Mucosa of descending colon (tissue), 3 donors: ENCODE measurements at regions of chr2 and their contacts with region 1.

Region 1: GRCh38 chr2:196275646-196276352 is 104.4 kb upstream of the STK17B start:
- DNase-seq: no peak
- ATAC-seq: peak; percentile 64
- H3K4me3 ChIP-seq: no peak overlapping the region
- H3K4me1 ChIP-seq: peaks cover 22% of the 10 kb centered on the region
- CTCF ChIP-seq: no peak

Region 2: DNA sequence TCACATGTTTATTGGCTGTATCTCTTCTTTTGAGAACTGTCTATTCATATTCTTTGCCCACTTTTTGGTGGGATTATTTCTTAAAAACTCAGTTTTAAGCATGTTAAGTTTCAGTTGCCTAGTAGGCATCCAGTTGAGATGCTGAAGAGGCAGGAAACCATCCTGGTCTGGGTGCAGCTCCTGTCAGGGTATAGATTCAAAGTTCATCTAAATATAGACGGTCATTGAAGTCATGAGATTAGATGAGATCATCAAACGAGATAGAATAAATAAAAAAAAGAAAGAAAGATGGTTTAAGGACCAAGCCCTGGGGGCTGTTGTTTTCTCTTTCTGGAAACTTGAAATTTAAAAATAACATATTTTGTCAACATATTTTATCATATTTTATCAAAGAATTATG is 198.0 kb before region 1 on chr2:
- intact Hi-C with region 1: loop called in 1 of 2 experiments (anchors 1 kb)
- DNase-seq: no peak
- ATAC-seq: peak; percentile 76
- H3K4me3 ChIP-seq: no peak overlapping the region
- H3K4me1 ChIP-seq: no peaks in the 10 kb centered on the region
- CTCF ChIP-seq: no peak

Region 3: GRCh38 chr2:196376984-196377877 is 101.4 kb after region 1 on chr2:
- intact Hi-C with region 1: no loop called
- DNase-seq: no peak
- ATAC-seq: no peak
- H3K4me3 ChIP-seq: no peak overlapping the region
- H3K4me1 ChIP-seq: no peaks in the 10 kb centered on the region
- CTCF ChIP-seq: no peak

Region 4: GRCh38 chr2:196551028-196551427 is 275.2 kb after region 1 on chr2:
- intact Hi-C with region 1: no loop called
- DNase-seq: no peak
- ATAC-seq: no peak
- H3K4me3 ChIP-seq: no peak overlapping the region
- H3K4me1 ChIP-seq: no peaks in the 10 kb centered on the region
- CTCF ChIP-seq: no peak